Activated CD4-positive, alpha-beta T cell treated with anti-CD3 and anti-CD28 coated beads, Interleukin-2, amount 10 ng/mL, durations not matched to agents 7 days and 5 days (primary cell): ENCODE measurements at regions of chr15 and their contacts with region 1.

Region 1: DNA sequence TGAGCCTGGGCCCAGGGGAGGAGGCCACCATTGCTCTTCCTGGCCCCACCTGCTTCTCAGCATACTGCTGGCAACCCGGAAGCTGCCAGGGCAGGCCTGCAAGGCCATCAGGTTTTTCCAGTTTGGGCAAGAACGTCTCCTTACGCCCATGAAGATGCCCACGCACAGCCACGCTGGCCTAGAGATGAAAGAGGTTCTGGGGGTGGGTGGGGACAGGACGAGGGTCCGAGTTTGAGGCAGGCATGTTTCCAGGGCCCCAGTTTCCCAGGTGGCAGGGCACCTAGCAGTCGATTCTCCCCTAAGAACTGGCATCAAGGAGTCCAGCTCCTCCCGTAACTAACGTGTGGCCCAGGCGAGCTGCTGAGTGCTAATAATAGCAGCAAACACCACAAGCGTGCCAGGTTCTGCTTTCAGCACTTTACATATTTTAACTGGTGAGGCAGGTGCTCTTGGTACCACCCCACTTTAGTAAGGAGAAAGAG is 45.8 kb downstream of the ZNF710 start:
- DNase-seq: no peak
- H3K4me3 Mint-ChIP-seq: no peak overlapping the region
- H3K27ac Mint-ChIP-seq: peak overlapping the region; percentile 46
- H3K4me1 Mint-ChIP-seq: peaks cover 15% of the 10 kb centered on the region
- H3K27me3 Mint-ChIP-seq: no peaks in the 10 kb centered on the region

Region 2: DNA sequence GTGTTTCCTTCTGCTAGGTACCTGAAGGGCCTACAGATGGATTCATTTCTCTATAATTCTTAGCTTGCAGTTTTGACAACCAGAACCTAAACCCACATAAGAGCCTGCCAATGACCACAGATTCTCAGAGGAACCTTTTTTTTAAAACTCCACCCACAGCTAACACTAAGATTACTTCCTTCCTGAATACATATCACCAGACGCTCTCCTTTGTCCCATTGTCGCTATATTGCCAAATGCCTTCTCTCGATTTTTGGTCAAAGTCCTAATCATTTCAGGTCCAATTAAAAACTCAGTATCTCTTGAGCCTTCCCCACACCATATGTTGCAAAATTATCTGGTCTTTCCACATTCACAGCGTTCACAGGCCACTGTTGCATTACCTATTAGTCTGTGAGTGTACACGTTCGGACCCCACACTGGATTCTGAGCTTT is 33.4 kb before region 1 on chr15:
- CTCF ChIA-PET with region 1: no interaction called
- POLR2A ChIA-PET with region 1: no interaction called
- DNase-seq: peak; percentile 81
- H3K4me3 Mint-ChIP-seq: peak overlapping the region; percentile 67
- H3K27ac Mint-ChIP-seq: peak overlapping the region; percentile 87
- H3K4me1 Mint-ChIP-seq: peaks cover 61% of the 10 kb centered on the region
- H3K27me3 Mint-ChIP-seq: no peaks in the 10 kb centered on the region

Region 3: DNA sequence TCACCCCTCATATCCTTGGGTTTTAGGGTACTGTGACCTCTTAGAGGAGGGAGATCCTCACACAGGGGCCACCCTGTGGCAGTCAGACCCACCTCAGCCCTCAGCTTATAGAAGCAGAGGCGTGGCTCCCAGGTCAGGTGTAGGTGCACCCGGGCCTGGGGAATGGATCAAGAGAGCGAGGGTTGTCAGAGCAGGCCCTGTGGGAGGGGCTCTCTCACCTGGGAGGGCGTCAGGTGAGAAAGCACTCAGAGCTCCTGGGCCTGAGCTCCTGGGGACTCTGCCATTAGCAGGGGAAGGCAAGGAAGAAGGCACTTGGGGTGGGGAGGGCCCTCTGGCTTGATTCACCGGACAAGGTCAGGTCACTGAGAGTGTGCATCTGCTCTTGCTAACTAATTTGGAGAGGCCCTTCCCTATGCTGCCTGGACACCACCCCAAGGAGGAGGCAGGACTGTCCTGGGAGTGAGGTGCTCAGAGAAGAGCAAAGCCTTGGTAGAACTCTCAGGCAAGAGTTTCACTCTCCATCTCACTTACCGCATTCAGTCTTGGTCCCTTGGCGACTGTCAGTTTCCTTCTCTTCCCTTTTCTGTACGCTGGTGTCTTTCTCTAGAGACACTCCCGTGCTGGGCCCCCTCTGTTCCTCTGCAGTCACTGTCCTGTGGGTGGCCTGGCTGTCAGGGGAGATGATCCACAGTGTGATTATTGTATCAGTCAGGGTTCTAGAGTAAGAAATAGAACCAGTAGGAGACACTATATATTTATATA is 11.2 kb after region 1 on chr15:
- CTCF ChIA-PET with region 1: interaction called, 10 read pairs
- POLR2A ChIA-PET with region 1: no interaction called
- DNase-seq: no peak
- H3K4me3 Mint-ChIP-seq: no peak overlapping the region
- H3K27ac Mint-ChIP-seq: peak overlapping the region; percentile 92
- H3K4me1 Mint-ChIP-seq: peaks cover 50% of the 10 kb centered on the region
- H3K27me3 Mint-ChIP-seq: no peaks in the 10 kb centered on the region